Dorsolateral prefrontal cortex (tissue), 120 donors: ENCODE measurements at regions of chr3 and their contacts with region 1.

Region 1: GRCh38 chr3:62873761-62874647 is 1.2 kb downstream of the CADPS start:
- DNase-seq: peak; percentile 33 to 82 (median 70)
- H3K4me3 ChIP-seq: peak overlapping the region; percentile 54 to 88 (median 76)
- H3K27ac ChIP-seq: peak overlapping the region in 57 of 59 donors; percentile 20 to 93 (median 82)
- H3K27me3 ChIP-seq: peaks cover 0 to 15% (median 0%) of the 10 kb centered on the region in 45 donors
- CTCF ChIP-seq: peak in 26 of 56 donors; percentile 3 to 55 (median 18)

Region 2: GRCh38 chr3:62529201-62529600 is 344.8 kb before region 1 on chr3:
- intact Hi-C with region 1: no loop called
- DNase-seq: peak in 1 of 10 donors; percentile 82
- H3K4me3 ChIP-seq: no peak overlapping the region
- H3K27ac ChIP-seq: peak overlapping the region in 8 of 59 donors; percentile 3 to 62 (median 22)
- H3K27me3 ChIP-seq: no peaks in the 10 kb centered on the region
- CTCF ChIP-seq: no peak

Region 3: DNA sequence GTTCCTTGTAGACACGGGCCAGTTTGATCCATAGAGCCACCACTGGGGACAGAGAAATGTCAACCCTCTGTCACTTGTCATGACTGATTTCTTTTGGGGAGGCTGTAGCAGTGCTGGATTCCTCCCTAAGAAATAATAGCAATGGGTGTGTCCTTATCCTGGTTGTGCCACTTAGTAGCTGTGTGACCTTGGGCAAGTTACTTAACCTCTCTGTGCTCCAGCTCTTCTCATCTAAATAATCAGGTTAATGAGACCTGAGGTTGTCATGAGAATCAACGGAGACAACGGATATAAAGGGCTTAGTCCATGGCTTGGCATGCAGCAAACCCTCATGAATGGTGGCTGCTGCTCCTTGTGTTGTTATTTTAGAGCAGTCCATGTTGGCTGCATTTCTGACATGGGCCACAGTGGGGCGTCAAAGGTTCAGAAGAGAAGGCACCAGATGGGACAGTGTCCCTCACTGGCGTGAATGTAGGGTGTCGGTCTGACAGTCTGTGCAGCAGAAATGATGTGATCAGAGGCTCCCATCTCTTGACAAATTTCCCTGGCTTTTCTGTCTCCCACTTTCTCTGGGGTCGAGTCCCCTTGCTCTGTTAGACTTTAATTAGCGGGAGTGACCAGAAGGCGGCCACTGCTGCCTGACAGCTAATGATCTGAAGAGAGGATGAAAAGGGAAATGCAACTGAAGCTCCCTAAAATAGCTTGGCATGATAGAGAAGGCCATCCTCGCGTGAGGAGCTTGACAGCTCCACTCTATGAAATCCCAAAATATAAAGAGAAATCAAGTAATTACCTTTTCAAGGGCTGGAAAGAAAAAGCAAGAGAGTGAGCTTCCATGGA is 208.2 kb before region 1 on chr3:
- intact Hi-C with region 1: loop called (anchors 5 kb)
- DNase-seq: peak; percentile 55 to 89 (median 79)
- H3K4me3 ChIP-seq: peak overlapping the region in 25 of 59 donors; percentile 3 to 43 (median 22)
- H3K27ac ChIP-seq: peak overlapping the region in 24 of 59 donors; percentile 5 to 64 (median 38)
- H3K27me3 ChIP-seq: peaks cover 0 to 5% (median 0%) of the 10 kb centered on the region in 45 donors
- CTCF ChIP-seq: peak; percentile 20 to 88 (median 72)

Region 4: GRCh38 chr3:62718515-62719320 is 155.3 kb before region 1 on chr3:
- intact Hi-C with region 1: no loop called
- DNase-seq: peak in 9 of 10 donors; percentile 23 to 81 (median 66)
- H3K4me3 ChIP-seq: no peak overlapping the region
- H3K27ac ChIP-seq: peak overlapping the region in 10 of 59 donors; percentile 5 to 63 (median 44)
- H3K27me3 ChIP-seq: peaks cover 0 to 4% (median 0%) of the 10 kb centered on the region in 45 donors
- CTCF ChIP-seq: no peak

Region 5: GRCh38 chr3:63064209-63064942 is 190.4 kb after region 1 on chr3:
- intact Hi-C with region 1: loop called in 1 of 2 experiments (anchors 5 kb)
- DNase-seq: no peak
- H3K4me3 ChIP-seq: no peak overlapping the region
- H3K27ac ChIP-seq: peak overlapping the region in 48 of 59 donors; percentile 7 to 90 (median 60)
- H3K27me3 ChIP-seq: no peaks in the 10 kb centered on the region
- CTCF ChIP-seq: no peak

Region 6: DNA sequence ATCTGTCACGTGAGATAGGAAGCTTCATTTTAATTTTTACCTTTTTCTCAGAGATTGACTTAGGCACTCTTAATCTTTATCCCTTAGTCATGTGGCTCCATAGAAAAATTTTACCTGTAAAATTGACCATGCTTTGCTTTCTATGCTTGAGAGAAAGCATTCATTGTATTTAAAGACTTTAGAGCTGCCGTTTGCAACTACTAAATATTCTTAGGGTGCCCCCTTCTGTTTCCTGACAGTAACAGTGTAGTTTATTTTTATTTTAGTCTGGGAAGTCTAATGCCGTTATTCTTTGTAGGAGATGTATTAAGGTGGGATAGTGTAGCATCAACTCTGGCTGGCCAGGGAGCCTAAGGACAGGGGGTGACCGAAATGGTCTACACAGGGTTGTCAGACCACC is 319.6 kb after region 1 on chr3:
- intact Hi-C with region 1: loop called (anchors 10 kb)
- DNase-seq: no peak
- H3K4me3 ChIP-seq: no peak overlapping the region
- H3K27ac ChIP-seq: no peak overlapping the region
- H3K27me3 ChIP-seq: no peaks in the 10 kb centered on the region
- CTCF ChIP-seq: peak; percentile 36 to 85 (median 60)